Naive thymus-derived CD4-positive, alpha-beta T cell (primary cell): ENCODE measurements at regions of chr10 and their contacts with region 1.

Region 1: GRCh38 chr10:43078987-43079275 is 2.1 kb downstream of the RET start:
- DNase-seq: peak in 1 of 9 donors; percentile 42
- ATAC-seq: no peak
- H3K4me3 ChIP-seq: no peak overlapping the region
- H3K4me3 Mint-ChIP-seq: peak overlapping the region in 5 of 10 donors; percentile 13 to 72 (median 43)
- H3K27ac ChIP-seq: no peak overlapping the region
- H3K27ac Mint-ChIP-seq: no peak overlapping the region
- H3K4me1 ChIP-seq: no peaks in the 10 kb centered on the region
- H3K4me1 Mint-ChIP-seq: peaks cover 0 to 16% (median 8%) of the 10 kb centered on the region in 7 donors
- H3K27me3 ChIP-seq: no peaks in the 10 kb centered on the region
- H3K27me3 Mint-ChIP-seq: peaks cover 15 to 43% (median 33%) of the 10 kb centered on the region in 5 donors

Region 2: DNA sequence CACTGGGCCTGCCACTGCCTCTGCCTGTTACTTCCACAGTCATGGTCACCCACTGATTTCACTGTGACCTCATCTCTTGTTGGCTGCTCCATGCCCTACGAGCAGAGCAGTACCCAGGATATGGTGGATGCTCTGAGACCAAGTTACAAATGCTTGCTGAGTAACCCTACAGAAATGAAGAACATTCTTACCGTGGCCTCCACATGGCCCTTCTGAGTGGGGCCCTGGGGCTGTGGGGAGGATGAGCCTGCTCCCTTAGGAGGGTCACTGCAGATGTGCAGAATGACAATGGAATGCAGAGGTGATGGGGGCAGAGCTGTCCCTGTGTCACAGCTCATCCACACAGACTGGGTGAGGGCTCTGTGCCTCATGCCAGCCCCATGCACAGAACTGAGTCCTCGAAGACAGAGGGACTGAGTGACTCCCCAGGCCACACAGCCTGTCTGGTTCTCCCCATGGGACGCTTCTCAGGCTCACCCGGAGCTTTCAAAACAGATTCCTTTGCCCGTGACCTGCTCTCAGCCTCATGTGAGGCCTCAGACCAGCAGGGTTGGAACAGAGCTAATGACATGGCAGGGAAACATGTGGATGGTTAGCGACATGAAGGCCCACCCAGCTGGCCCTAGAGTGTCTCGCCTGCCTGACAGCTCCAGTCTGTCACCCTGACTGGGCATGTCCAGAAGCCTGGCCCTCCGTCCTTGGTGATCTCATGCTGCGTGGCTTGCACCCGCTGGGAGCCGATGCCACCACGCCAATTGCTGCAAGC is 30.2 kb before region 1 on chr10:
- CTCF ChIA-PET with region 1: no interaction called
- POLR2A ChIA-PET with region 1: no interaction called
- intact Hi-C with region 1: no loop called
- DNase-seq: no peak
- ATAC-seq: no peak
- H3K4me3 ChIP-seq: no peak overlapping the region
- H3K4me3 Mint-ChIP-seq: no peak overlapping the region
- H3K27ac ChIP-seq: no peak overlapping the region
- H3K27ac Mint-ChIP-seq: no peak overlapping the region
- H3K4me1 ChIP-seq: no peaks in the 10 kb centered on the region
- H3K4me1 Mint-ChIP-seq: no peaks in the 10 kb centered on the region
- H3K27me3 ChIP-seq: no peaks in the 10 kb centered on the region
- H3K27me3 Mint-ChIP-seq: peaks cover 0 to 23% (median 11%) of the 10 kb centered on the region in 5 donors

Region 3: GRCh38 chr10:43067391-43068135 is 11.4 kb before region 1 on chr10:
- CTCF ChIA-PET with region 1: no interaction called
- POLR2A ChIA-PET with region 1: no interaction called
- intact Hi-C with region 1: loop called in 1 of 2 experiments (anchors 1 kb)
- DNase-seq: no peak
- ATAC-seq: no peak
- H3K4me3 ChIP-seq: no peak overlapping the region
- H3K4me3 Mint-ChIP-seq: no peak overlapping the region
- H3K27ac ChIP-seq: no peak overlapping the region
- H3K27ac Mint-ChIP-seq: peak overlapping the region in 1 of 9 donors; percentile 30
- H3K4me1 ChIP-seq: no peaks in the 10 kb centered on the region
- H3K4me1 Mint-ChIP-seq: no peaks in the 10 kb centered on the region
- H3K27me3 ChIP-seq: no peaks in the 10 kb centered on the region
- H3K27me3 Mint-ChIP-seq: no peaks in the 10 kb centered on the region